HepG2 (cell line): ENCODE measurements at regions of chr1 and their contacts with region 1.

Region 1: GRCh38 chr1:38834937-38835827 is 24.4 kb downstream of the RRAGC start:
- DNase-seq: peak; percentile 83
- ATAC-seq: peak; percentile 94
- H3K4me3 ChIP-seq: no peak overlapping the region
- H3K27ac ChIP-seq: no peak overlapping the region
- H3K4me1 ChIP-seq: no peaks in the 10 kb centered on the region
- H3K27me3 ChIP-seq: peaks cover 0 to 14% of the 10 kb centered on the region in 2 experiments; a peak in 4 of 5 replicates
- CTCF ChIP-seq: peak; percentile 91
- EP300 ChIP-seq: no peak
- POLR2A ChIP-seq: no peak
- RAD21 ChIP-seq: peak; percentile 63; the same call in 1 of the 2 replicates

Region 2: DNA sequence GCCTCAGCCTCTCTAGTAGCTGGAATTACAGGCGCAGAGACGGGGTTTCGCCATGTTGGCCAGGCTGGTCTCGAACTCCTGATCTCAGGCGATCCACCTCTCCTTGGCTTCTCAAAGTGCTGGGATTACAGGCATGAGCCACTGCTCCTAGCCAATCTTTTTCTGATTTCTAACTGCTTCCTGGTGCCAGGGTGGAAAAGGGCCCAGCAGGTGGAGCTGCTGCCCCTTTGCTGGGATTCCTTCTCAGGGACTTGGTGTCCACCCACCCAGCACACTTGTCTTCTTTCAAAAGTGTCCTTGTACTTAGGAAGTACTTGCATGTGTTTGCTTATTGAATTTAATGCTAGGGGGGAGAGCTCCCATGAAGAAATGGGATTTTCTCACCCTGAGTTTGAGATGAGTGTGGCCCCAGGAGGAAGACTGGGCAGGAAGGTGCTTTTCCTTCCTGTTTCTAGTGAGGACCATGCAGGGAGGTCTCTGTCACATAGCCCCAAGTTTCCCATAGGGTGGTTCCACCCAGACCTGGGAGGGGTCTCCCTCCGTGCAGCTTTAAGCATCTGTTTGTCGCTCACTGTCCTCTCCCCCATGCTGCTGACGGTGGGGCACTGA is 808.5 kb before region 1 on chr1:
- CTCF ChIA-PET with region 1: interaction called, 11 read pairs
- POLR2A ChIA-PET with region 1: no interaction called
- in situ Hi-C with region 1: no loop called
- intact Hi-C with region 1: no loop called
- DNase-seq: no peak
- ATAC-seq: peak; percentile 48
- H3K4me3 ChIP-seq: no peak overlapping the region
- H3K27ac ChIP-seq: no peak overlapping the region
- H3K4me1 ChIP-seq: peaks cover 22% of the 10 kb centered on the region
- H3K27me3 ChIP-seq: no peaks in the 10 kb centered on the region
- CTCF ChIP-seq: peak; percentile 81
- EP300 ChIP-seq: no peak
- POLR2A ChIP-seq: no peak
- RAD21 ChIP-seq: peak; percentile 51; the same call in 1 of the 2 replicates

Region 3: DNA sequence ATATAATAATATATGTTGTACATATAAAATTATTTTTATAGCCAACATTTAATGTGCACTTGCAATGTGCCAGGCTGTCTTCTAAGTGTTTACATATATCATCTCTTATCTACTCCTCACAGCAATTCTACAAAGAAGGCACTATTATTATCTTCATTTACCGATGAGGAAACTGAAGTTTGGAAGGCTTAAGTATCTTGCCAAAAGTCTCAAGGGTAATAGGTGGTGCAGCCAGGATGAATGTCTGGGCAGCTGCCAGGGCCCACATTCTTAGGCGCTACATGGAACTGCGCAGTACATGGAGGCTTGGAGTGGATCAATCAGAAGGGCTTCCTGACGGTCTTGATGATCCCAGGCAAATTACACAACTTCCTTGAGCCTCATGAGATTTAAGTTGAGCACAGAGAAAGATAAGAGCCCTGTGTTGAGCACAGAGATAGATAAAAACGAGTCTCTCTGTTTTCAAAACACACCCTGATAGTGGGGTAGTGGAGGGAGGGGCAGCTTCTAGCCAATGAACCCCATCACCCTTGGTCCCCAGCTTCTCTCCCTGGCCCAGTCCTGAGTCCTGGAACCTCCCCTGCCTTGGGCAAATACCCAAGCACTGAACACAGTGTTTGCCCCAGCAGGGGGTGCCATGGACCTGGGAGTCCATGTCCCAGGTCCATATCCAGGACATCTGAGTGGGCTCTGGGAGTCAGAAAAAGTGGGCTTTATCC is 797.8 kb before region 1 on chr1:
- CTCF ChIA-PET with region 1: no interaction called
- POLR2A ChIA-PET with region 1: no interaction called
- in situ Hi-C with region 1: no loop called
- intact Hi-C with region 1: loop called (anchors 5 kb)
- DNase-seq: no peak
- ATAC-seq: peak; percentile 84
- H3K4me3 ChIP-seq: no peak overlapping the region
- H3K27ac ChIP-seq: no peak overlapping the region
- H3K4me1 ChIP-seq: no peaks in the 10 kb centered on the region
- H3K27me3 ChIP-seq: peaks cover 6 to 33% of the 10 kb centered on the region in 2 experiments; a peak in 4 of 5 replicates
- CTCF ChIP-seq: peak; percentile 81
- EP300 ChIP-seq: no peak
- POLR2A ChIP-seq: no peak
- RAD21 ChIP-seq: peak; percentile 65

Region 4: GRCh38 chr1:38608202-38608864 is 226.8 kb before region 1 on chr1:
- CTCF ChIA-PET with region 1: interaction called, 9 read pairs
- POLR2A ChIA-PET with region 1: no interaction called
- in situ Hi-C with region 1: no loop called
- intact Hi-C with region 1: loop called (anchors 2 kb)
- DNase-seq: peak; percentile 12
- ATAC-seq: peak; percentile 80
- H3K4me3 ChIP-seq: no peak overlapping the region
- H3K27ac ChIP-seq: no peak overlapping the region
- H3K4me1 ChIP-seq: peaks cover 6% of the 10 kb centered on the region; the same call in 1 of the 2 replicates
- H3K27me3 ChIP-seq: no peaks in the 10 kb centered on the region
- CTCF ChIP-seq: peak; percentile 78
- EP300 ChIP-seq: no peak
- POLR2A ChIP-seq: no peak
- RAD21 ChIP-seq: no peak

Region 5: DNA sequence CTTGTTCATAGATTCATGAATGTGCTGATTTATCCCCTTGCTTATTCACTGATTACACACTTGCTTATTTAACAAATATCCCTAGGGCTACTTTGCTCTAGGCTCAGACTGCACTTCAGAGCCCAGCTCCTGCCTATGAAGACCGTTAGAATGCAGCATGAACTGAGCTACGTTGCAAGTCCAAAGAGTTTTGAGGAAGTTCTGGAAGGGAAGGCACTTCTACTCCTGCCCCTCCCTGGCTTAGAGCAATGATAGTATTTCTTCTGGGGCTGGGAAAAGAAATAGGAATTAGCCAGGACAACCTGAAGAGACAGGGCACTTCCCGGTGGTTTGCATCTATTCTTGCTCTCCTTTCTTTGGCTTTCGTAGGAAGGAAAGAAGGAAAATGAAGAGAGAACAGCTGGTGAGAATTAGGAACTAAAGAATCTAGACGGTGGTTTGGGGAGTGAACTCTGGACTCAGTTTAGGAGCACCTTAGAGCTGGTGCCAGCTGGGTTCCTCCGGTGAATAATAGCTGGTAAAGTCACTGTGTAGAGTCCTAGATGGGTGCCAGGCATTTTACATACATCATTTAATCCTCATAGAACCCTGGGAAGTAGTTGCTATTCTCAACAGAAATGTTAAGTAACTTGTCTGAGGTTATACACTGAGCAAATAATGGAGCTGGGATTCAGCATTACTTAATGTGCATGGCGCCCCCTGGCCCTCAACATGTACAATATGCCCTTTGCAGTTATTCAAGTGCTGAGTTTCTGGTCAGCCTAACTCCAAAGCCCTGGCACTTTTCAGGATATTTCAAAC is 256.9 kb after region 1 on chr1:
- CTCF ChIA-PET with region 1: no interaction called
- POLR2A ChIA-PET with region 1: no interaction called
- in situ Hi-C with region 1: no loop called
- intact Hi-C with region 1: loop called (anchors 5 kb)
- DNase-seq: peak; percentile 74
- ATAC-seq: peak; percentile 86
- H3K4me3 ChIP-seq: no peak overlapping the region
- H3K27ac ChIP-seq: no peak overlapping the region
- H3K4me1 ChIP-seq: peaks cover 29% of the 10 kb centered on the region
- H3K27me3 ChIP-seq: no peaks in the 10 kb centered on the region
- CTCF ChIP-seq: peak; percentile 83
- EP300 ChIP-seq: no peak
- POLR2A ChIP-seq: no peak
- RAD21 ChIP-seq: peak; percentile 64; the same call in 1 of the 2 replicates

Region 6: GRCh38 chr1:39250460-39251240 is 415.5 kb after region 1 on chr1:
- CTCF ChIA-PET with region 1: no interaction called
- POLR2A ChIA-PET with region 1: no interaction called
- in situ Hi-C with region 1: no loop called
- intact Hi-C with region 1: no loop called
- DNase-seq: no peak
- ATAC-seq: no peak
- H3K4me3 ChIP-seq: no peak overlapping the region
- H3K27ac ChIP-seq: no peak overlapping the region
- H3K4me1 ChIP-seq: no peaks in the 10 kb centered on the region
- H3K27me3 ChIP-seq: no peaks in the 10 kb centered on the region
- CTCF ChIP-seq: no peak
- EP300 ChIP-seq: no peak
- POLR2A ChIP-seq: no peak
- RAD21 ChIP-seq: no peak